ENCODE measurements at regions of chr1 and their contacts with region 1.

Region 1: GRCh38 chr1:150561974-150562445 is 12.8 kb downstream of the ADAMTSL4 start:
- DNase-seq: peak; percentile 77
- ATAC-seq: peak; percentile 72
- H3K4me3 ChIP-seq: peak overlapping the region; percentile 72 to 80 (median 73)
- H3K27ac ChIP-seq: peak overlapping the region; percentile 91
- H3K4me1 ChIP-seq: peaks cover 51% of the 10 kb centered on the region
- H3K27me3 ChIP-seq: no peaks in the 10 kb centered on the region
- CTCF ChIP-seq: no peak
- EP300 ChIP-seq: peak in 1 of 2 experiments; percentile 96; a peak in 2 of 4 replicates
- POLR2A ChIP-seq: peak; percentile 46 to 65; a peak in 2 of 4 replicates
- RAD21 ChIP-seq: 0 out of 2 replicates have a peak, but pooled peaks have one; percentile 4

Region 2: GRCh38 chr1:150464422-150464826 is 97.6 kb before region 1 on chr1:
- CTCF ChIA-PET with region 1: interaction called, 20 read pairs
- POLR2A ChIA-PET with region 1: no interaction called
- in situ Hi-C with region 1: no loop called
- intact Hi-C with region 1: no loop called
- DNase-seq: peak; percentile 51
- ATAC-seq: peak; percentile 67
- H3K4me3 ChIP-seq: no peak overlapping the region
- H3K27ac ChIP-seq: no peak overlapping the region
- H3K4me1 ChIP-seq: peaks cover 22% of the 10 kb centered on the region
- H3K27me3 ChIP-seq: no peaks in the 10 kb centered on the region
- CTCF ChIP-seq: peak; percentile 89
- EP300 ChIP-seq: no peak
- POLR2A ChIP-seq: no peak
- RAD21 ChIP-seq: peak; percentile 82

Region 3: DNA sequence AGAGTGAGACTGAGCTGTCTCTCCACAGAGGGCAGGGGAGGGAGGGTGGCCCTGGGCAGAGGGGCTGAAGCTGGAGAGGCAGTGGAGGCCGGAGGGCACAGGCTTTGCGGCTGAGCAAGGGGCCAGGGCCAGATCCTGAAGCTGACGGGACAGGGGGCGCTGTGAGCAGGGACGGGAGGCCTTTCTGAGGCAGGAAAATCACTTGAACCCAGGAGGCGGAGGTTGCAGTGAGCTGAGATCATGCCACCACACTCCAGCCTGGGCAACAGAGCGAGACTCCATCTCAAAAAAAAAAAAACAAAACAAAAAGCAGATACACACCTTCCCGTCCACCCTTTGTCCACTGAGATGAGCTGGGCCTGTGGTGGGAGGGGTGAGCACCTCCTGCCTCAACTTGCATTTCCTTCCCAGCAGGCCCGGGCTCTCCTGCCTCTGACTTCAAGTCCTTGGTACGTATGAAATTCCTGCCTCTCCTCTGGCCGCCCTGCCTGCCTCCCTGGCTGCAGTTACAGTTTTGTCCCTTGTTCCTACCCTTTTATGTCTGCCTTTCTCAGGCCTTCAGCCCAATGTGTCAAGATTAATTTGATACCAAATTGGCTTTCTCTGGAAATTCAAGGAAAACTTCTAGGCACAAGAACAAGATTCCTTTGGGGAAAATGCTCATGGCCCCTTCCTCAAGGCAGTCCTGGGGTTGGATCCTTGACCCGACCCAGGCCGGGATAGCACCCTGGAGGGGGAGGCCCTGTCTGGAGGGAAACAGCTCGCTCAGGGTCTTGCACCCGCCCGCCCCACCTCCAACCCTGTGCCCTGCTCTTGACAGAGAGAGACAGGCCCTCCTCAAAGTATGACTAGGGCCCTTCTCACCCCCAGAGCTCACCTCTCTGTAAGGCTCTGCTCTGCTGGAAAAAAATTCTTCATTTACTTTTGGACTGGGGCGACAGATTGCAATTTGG is 24.0 kb before region 1 on chr1:
- CTCF ChIA-PET with region 1: no interaction called
- POLR2A ChIA-PET with region 1: interaction called, 29 read pairs
- in situ Hi-C with region 1: no loop called
- intact Hi-C with region 1: no loop called
- DNase-seq: no peak
- ATAC-seq: peak; percentile 64
- H3K4me3 ChIP-seq: no peak overlapping the region
- H3K27ac ChIP-seq: no peak overlapping the region
- H3K4me1 ChIP-seq: peaks cover 70% of the 10 kb centered on the region
- H3K27me3 ChIP-seq: no peaks in the 10 kb centered on the region; a peak in 1 of 5 replicates
- CTCF ChIP-seq: peak; percentile 61
- EP300 ChIP-seq: no peak
- POLR2A ChIP-seq: no peak
- RAD21 ChIP-seq: no peak

Region 4: GRCh38 chr1:150606463-150607148 is 44.6 kb after region 1 on chr1:
- CTCF ChIA-PET with region 1: no interaction called
- POLR2A ChIA-PET with region 1: interaction called, 46 read pairs
- in situ Hi-C with region 1: no loop called
- intact Hi-C with region 1: no loop called
- DNase-seq: no peak
- ATAC-seq: no peak
- H3K4me3 ChIP-seq: no peak overlapping the region
- H3K27ac ChIP-seq: peak overlapping the region; percentile 17
- H3K4me1 ChIP-seq: peaks cover 66% of the 10 kb centered on the region
- H3K27me3 ChIP-seq: no peaks in the 10 kb centered on the region
- CTCF ChIP-seq: no peak
- EP300 ChIP-seq: no peak
- POLR2A ChIP-seq: no peak
- RAD21 ChIP-seq: no peak

Region 5: GRCh38 chr1:150629115-150629928 is 67.3 kb after region 1 on chr1 and contains the start of gene ENSA:
- CTCF ChIA-PET with region 1: no interaction called
- POLR2A ChIA-PET with region 1: interaction called, 62 read pairs
- in situ Hi-C with region 1: loop called (anchors 5 kb)
- intact Hi-C with region 1: no loop called
- DNase-seq: peak; percentile 99
- ATAC-seq: peak; percentile 96
- H3K4me3 ChIP-seq: peak within 1 kb of the TSS; percentile 72 to 79 (median 76)
- H3K27ac ChIP-seq: peak within 1 kb of the TSS; percentile 90
- H3K4me1 ChIP-seq: peaks cover 25% of the 10 kb centered on the region
- H3K27me3 ChIP-seq: no peaks in the 10 kb centered on the region; a peak in 1 of 5 replicates
- CTCF ChIP-seq: no peak
- EP300 ChIP-seq: 0 out of 4 replicates have a peak, but pooled peaks of 1 of the 2 experiments have one; percentile 28
- POLR2A ChIP-seq: peak; percentile 70 to 72
- RAD21 ChIP-seq: no peak
- total RNA-seq, gene ENSA: 111 and 137 TPM in 2 replicates

Region 6: GRCh38 chr1:150765296-150765976 is 203.4 kb after region 1 on chr1 and contains the start of gene CTSS:
- CTCF ChIA-PET with region 1: no interaction called
- POLR2A ChIA-PET with region 1: no interaction called
- in situ Hi-C with region 1: no loop called
- intact Hi-C with region 1: no loop called
- DNase-seq: no peak
- ATAC-seq: peak; percentile 44; the same call in 1 of the 3 replicates
- H3K4me3 ChIP-seq: peak within 1 kb of the TSS; percentile 20 to 46 (median 24); a peak in 5 of 6 replicates
- H3K27ac ChIP-seq: peak within 1 kb of the TSS; percentile 15
- H3K4me1 ChIP-seq: peaks cover 25% of the 10 kb centered on the region
- H3K27me3 ChIP-seq: no peaks in the 10 kb centered on the region; a peak in 1 of 5 replicates
- CTCF ChIP-seq: no peak
- EP300 ChIP-seq: no peak
- POLR2A ChIP-seq: no peak
- RAD21 ChIP-seq: no peak
- total RNA-seq, gene CTSS: 1.0 and 1.3 TPM in 2 replicates

Region 7: DNA sequence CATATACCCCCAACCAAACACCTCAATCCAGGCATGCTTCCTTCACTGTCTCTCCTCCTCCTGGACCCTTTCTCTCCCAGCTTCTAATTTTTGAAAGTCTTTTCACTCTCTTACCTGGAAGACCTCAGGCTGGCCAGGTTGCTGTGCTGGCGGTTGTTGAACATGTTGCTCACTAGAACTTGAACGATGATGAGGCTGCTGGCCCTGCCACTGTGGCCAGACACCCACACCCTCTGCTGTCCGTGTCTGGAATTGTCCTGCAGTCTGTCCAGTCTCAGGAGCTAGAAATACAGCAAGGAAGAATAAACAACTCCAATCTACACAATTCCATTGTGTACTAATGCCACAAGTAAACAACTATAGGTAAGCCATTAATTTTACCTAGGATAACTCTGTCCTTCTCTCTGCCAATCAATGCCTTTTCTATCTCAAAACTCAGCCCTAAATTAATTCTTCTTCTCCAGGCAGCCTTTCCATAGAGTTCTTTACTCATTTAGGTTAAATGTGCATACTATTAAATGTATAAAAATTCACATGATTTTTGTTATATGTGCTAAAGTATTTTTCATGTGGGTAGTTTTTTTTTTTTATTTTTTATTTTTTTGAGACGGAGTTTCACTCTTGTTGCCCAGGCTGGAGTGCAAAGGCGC is 251.2 kb after region 1 on chr1:
- CTCF ChIA-PET with region 1: no interaction called
- POLR2A ChIA-PET with region 1: interaction called, 4 read pairs
- in situ Hi-C with region 1: loop called (anchors 5 kb)
- intact Hi-C with region 1: no loop called
- DNase-seq: peak; percentile 36
- ATAC-seq: peak; percentile 93
- H3K4me3 ChIP-seq: no peak overlapping the region
- H3K27ac ChIP-seq: no peak overlapping the region
- H3K4me1 ChIP-seq: no peaks in the 10 kb centered on the region
- H3K27me3 ChIP-seq: no peaks in the 10 kb centered on the region
- CTCF ChIP-seq: peak; percentile 84
- EP300 ChIP-seq: no peak
- POLR2A ChIP-seq: no peak
- RAD21 ChIP-seq: peak; percentile 79

Region 8: GRCh38 chr1:151085953-151086559 is 524.0 kb after region 1 on chr1:
- CTCF ChIA-PET with region 1: no interaction called
- POLR2A ChIA-PET with region 1: no interaction called
- in situ Hi-C with region 1: no loop called
- intact Hi-C with region 1: no loop called
- DNase-seq: no peak
- ATAC-seq: no peak
- H3K4me3 ChIP-seq: no peak overlapping the region
- H3K27ac ChIP-seq: no peak overlapping the region
- H3K4me1 ChIP-seq: no peaks in the 10 kb centered on the region
- H3K27me3 ChIP-seq: no peaks in the 10 kb centered on the region
- CTCF ChIP-seq: no peak
- EP300 ChIP-seq: no peak
- POLR2A ChIP-seq: no peak
- RAD21 ChIP-seq: no peak